Caco-2 (cell line): ENCODE measurements at regions of chr7 and their contacts with region 1.

Region 1: DNA sequence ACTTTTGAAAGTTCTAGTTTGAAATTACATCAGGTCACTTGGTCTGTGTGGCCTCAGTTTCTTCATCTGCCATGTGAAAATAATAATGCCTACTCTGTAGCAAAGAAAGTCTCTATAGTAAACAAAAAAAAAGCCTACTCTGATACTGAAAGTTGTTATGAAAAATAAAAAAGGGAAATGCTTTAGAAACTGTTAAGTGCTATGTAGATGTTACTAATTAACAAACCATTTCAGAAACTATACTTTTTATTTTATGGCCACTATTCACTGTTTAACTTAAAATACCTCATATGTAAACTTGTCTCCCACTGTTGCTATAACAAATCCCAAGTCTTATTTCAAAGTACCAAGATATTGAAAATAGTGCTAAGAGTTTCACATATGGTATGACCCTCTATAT is 50.6 kb downstream of the CFTR start:
- DNase-seq: no peak
- H3K4me3 ChIP-seq: no peak overlapping the region
- H3K4me3 Mint-ChIP-seq: no peak overlapping the region
- H3K27ac Mint-ChIP-seq: peak overlapping the region; percentile 54
- H3K4me1 ChIP-seq: peaks cover 39% of the 10 kb centered on the region
- H3K4me1 Mint-ChIP-seq: peaks cover 42% of the 10 kb centered on the region
- H3K27me3 ChIP-seq: no peaks in the 10 kb centered on the region
- H3K27me3 Mint-ChIP-seq: no peaks in the 10 kb centered on the region
- CTCF ChIP-seq: no peak

Region 2: DNA sequence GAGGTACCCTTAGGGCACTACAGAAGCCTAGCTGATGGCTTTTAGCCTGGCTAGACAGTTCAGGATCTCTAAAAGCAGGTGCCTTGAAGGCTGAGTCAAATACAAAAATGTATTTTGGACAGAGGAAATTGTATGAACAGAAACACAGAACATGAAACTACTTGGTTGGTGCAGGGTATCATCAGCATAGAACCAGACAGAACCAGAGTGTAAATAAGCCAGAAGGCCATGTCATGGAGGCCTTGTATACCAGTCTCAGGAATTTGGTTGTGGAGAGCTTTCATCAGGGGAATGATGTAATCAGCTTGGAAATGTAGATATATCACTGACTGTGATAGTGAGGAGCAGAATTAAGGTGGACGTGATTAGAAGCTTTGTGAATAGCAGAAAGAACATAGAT is 32.3 kb after region 1 on chr7:
- CTCF ChIA-PET with region 1: no interaction called
- POLR2A ChIA-PET with region 1: interaction called, 11 read pairs
- intact Hi-C with region 1: no loop called
- DNase-seq: no peak
- H3K4me3 ChIP-seq: no peak overlapping the region
- H3K4me3 Mint-ChIP-seq: no peak overlapping the region
- H3K27ac Mint-ChIP-seq: peak overlapping the region; percentile 52
- H3K4me1 ChIP-seq: peaks cover 42% of the 10 kb centered on the region
- H3K4me1 Mint-ChIP-seq: peaks cover 21% of the 10 kb centered on the region
- H3K27me3 ChIP-seq: no peaks in the 10 kb centered on the region
- H3K27me3 Mint-ChIP-seq: no peaks in the 10 kb centered on the region
- CTCF ChIP-seq: no peak

Region 3: GRCh38 chr7:117572856-117573620 is 42.6 kb after region 1 on chr7:
- CTCF ChIA-PET with region 1: no interaction called
- POLR2A ChIA-PET with region 1: no interaction called
- intact Hi-C with region 1: loop called (anchors 1 kb)
- DNase-seq: peak in 1 of 2 experiments; percentile 39
- H3K4me3 ChIP-seq: no peak overlapping the region
- H3K4me3 Mint-ChIP-seq: peak overlapping the region; percentile 18
- H3K27ac Mint-ChIP-seq: peak overlapping the region; percentile 65
- H3K4me1 ChIP-seq: peaks cover 63% of the 10 kb centered on the region
- H3K4me1 Mint-ChIP-seq: peaks cover 47% of the 10 kb centered on the region
- H3K27me3 ChIP-seq: no peaks in the 10 kb centered on the region
- H3K27me3 Mint-ChIP-seq: no peaks in the 10 kb centered on the region
- CTCF ChIP-seq: no peak